Dorsolateral prefrontal cortex (tissue), 120 donors: ENCODE measurements at regions of chr9 and their contacts with region 1.

Region 1: GRCh38 chr9:101398068-101398929 is at the starts of genes MRPL50 and ZNF189:
- DNase-seq: peak; percentile 98 to 100 (median 100)
- H3K4me3 ChIP-seq: peak within 1 kb of the TSS; percentile 55 to 97 (median 85)
- H3K27ac ChIP-seq: peak within 1 kb of the TSS; percentile 49 to 96 (median 88)
- H3K27me3 ChIP-seq: no peaks in the 10 kb centered on the region
- CTCF ChIP-seq: peak in 31 of 56 donors; percentile 5 to 64 (median 35)
- total RNA-seq, gene MRPL50: 15.2 to 28.2 (median 22.3) TPM
- total RNA-seq, gene ZNF189: 30.0 to 78.6 (median 51.1) TPM

Region 2: GRCh38 chr9:100411472-100412283 is 986.6 kb before region 1 on chr9:
- intact Hi-C with region 1: loop called in 1 of 2 experiments (anchors 2 kb)
- DNase-seq: peak; percentile 85 to 95 (median 92)
- H3K4me3 ChIP-seq: peak overlapping the region; percentile 39 to 81 (median 63)
- H3K27ac ChIP-seq: peak overlapping the region in 23 of 59 donors; percentile 2 to 72 (median 46)
- H3K27me3 ChIP-seq: peaks cover 0 to 2% (median 0%) of the 10 kb centered on the region in 45 donors
- CTCF ChIP-seq: peak in 30 of 56 donors; percentile 8 to 57 (median 32)

Region 3: DNA sequence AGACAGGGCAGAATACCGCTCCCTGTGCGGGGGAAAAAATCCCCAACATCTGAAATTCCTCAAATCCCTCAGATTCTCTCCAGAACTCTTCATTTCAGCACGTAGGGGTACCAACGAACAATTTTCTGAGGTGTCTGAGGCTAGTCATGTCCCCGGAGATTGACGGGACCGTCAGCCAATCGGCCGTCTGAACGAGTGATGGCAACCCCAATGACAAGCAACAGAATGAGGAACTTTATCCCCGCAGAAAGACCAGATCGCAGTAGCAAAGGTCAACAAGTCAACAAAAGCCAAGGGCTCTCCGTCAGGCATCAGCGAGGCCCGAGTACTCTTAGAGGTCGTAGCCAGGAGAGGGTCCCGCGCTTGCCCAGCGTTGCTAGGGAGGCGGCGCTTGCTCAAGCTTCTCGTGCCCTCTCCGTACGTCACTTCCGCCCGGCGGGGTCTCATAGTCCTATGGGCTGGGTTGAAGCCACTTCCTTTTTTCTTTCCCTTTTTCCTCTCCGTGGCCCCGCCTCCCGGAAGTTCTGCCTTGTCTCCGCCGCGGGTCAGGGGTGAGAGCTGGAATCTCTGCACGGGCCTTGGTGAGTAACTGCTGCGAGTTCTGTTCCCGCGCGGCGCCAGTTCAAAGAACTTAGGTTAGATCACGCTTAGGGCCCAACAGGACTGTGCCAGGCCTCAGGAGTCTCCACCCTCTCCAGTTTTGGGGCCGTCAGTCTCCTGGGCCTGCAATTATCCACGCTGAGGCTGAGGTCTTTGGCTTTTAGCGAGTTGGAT is 135.2 kb after region 1 on chr9 and contains the start of gene RNF20:
- intact Hi-C with region 1: loop called (anchors 2 to 5 kb)
- DNase-seq: peak; percentile 99 to 100 (median 100)
- H3K4me3 ChIP-seq: peak within 1 kb of the TSS; percentile 48 to 99 (median 92)
- H3K27ac ChIP-seq: peak within 1 kb of the TSS; percentile 35 to 100 (median 97)
- H3K27me3 ChIP-seq: no peaks in the 10 kb centered on the region
- CTCF ChIP-seq: peak in 22 of 56 donors; percentile 3 to 57 (median 28)
- total RNA-seq, gene RNF20: 43.0 to 74.0 (median 56.6) TPM